Heart right ventricle (tissue), 16 donors: ENCODE measurements at regions of chr1 and their contacts with region 1.

Region 1: GRCh38 chr1:41268154-41268770 is 26.2 kb upstream of the SCMH1 start:
- DNase-seq: peak; percentile 68 to 73
- ATAC-seq: peak; percentile 65 to 89 (median 84)
- H3K4me3 ChIP-seq: no peak overlapping the region
- H3K27ac ChIP-seq: no peak overlapping the region
- H3K4me1 ChIP-seq: peaks cover 0 to 5% (median 4%) of the 10 kb centered on the region in 9 donors
- H3K27me3 ChIP-seq: peaks cover 0 to 3% (median 0%) of the 10 kb centered on the region in 7 donors
- CTCF ChIP-seq: peak; percentile 96 to 100 (median 98)

Region 2: GRCh38 chr1:41423511-41424221 is 155.4 kb after region 1 on chr1:
- intact Hi-C with region 1: loop called in 4 of 10 experiments (anchors 5 kb)
- DNase-seq: peak; percentile 49 to 60
- ATAC-seq: peak; percentile 56 to 84 (median 78)
- H3K4me3 ChIP-seq: peak overlapping the region in 9 of 10 donors; percentile 24 to 55 (median 43)
- H3K27ac ChIP-seq: peak overlapping the region in 9 of 10 donors; percentile 52 to 82 (median 75)
- H3K4me1 ChIP-seq: peaks cover 2 to 16% (median 8%) of the 10 kb centered on the region in 9 donors
- H3K27me3 ChIP-seq: peaks cover 0 to 2% (median 0%) of the 10 kb centered on the region in 7 donors
- CTCF ChIP-seq: peak in 8 of 9 donors; percentile 2 to 60 (median 46)

Region 3: DNA sequence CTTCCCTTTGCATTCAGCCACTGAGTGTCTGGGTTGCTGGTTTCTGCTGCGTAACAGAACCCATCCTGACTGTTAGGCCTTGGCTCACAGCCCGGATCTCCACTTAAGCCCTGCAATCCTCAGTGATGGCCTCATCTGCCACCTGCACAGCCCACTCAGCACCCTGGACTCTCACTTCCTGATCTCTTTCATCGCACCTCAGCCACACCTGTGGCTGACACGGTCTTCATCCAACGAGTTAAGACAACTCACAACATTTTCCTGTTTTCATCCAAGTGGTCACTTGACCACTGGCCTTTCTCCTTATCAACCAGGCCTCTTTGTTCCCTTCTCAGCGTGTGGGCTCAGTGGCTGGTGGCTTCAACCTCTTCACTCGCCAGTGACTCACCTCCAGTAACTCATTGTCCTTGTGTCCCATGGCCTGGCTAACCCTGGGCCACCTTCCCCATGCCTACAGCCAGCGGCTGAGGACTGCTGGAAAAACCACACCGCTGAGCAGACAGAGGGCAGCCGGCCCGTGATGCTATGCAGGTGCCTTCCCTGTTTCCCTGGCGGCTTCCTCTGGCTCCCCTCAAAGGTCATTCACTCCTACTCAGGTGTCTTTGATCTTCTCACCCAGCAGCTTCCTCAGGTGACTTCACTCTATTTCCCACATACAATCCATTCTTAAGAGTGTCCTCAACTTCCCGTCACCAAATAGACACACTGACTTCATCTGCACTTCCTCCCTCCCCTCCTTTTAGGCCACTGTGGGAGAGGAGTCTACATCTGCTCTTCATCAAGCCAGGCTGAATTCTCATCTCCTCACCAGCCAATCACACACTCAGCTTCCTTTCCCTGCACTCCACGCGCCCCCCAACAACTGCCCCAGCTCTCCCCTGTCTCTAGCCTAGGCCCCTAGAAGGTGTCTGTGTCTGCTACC is 236.1 kb after region 1 on chr1:
- intact Hi-C with region 1: loop called in 1 of 10 experiments (anchors 10 kb)
- DNase-seq: no peak
- ATAC-seq: peak in 1 of 8 donors; percentile 36
- H3K4me3 ChIP-seq: no peak overlapping the region
- H3K27ac ChIP-seq: no peak overlapping the region
- H3K4me1 ChIP-seq: peaks cover 0 to 32% (median 19%) of the 10 kb centered on the region in 9 donors
- H3K27me3 ChIP-seq: no peaks in the 10 kb centered on the region
- CTCF ChIP-seq: no peak

Region 4: GRCh38 chr1:41516168-41517061 is 248.2 kb after region 1 on chr1:
- intact Hi-C with region 1: loop called in 1 of 10 experiments (anchors 2 kb)
- DNase-seq: peak; percentile 91 to 94
- ATAC-seq: peak; percentile 94 to 98 (median 96)
- H3K4me3 ChIP-seq: peak overlapping the region; percentile 26 to 58 (median 50)
- H3K27ac ChIP-seq: peak overlapping the region in 5 of 10 donors; percentile 15 to 48 (median 21)
- H3K4me1 ChIP-seq: peaks cover 16 to 38% (median 22%) of the 10 kb centered on the region in 9 donors
- H3K27me3 ChIP-seq: no peaks in the 10 kb centered on the region
- CTCF ChIP-seq: peak; percentile 90 to 97 (median 92)